Posterior vena cava (tissue), 2 donors: ENCODE measurements at regions of chr13 and their contacts with region 1.

Region 1: DNA sequence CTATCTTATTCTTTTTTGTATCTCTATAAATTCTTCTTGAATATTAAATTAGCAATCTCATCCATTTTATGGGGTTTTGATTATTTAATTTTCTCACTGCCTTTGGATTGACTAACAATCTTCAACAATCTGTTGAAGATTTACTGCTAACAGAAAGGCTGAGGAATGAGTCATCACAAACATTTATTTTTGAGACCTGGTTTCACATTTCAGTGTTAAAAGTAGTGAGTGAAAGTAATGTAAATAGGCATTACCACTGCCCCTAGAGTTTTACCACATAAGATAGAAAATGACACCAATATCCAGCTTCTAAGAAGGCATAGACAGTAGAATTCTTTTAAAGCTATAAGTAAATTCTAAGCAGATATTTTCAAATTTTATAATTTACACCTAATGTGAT is 472.8 kb downstream of the OLFM4 start:
- DNase-seq: no peak

Region 2: GRCh38 chr13:53513226-53513625 is 11.8 kb after region 1 on chr13:
- intact Hi-C with region 1: loop called in 1 of 2 experiments (anchors 1 kb)
- DNase-seq: no peak